ENCODE measurements at regions of chr9 and their contacts with region 1.

Region 1: GRCh38 chr9:107465467-107466451 is 23.8 kb downstream of the KLF4 start:
- DNase-seq: peak; percentile 47
- H3K4me3 ChIP-seq: peak overlapping the region; percentile 32 to 57 (median 46)
- H3K27ac ChIP-seq: no peak overlapping the region
- H3K4me1 ChIP-seq: peaks cover 3% of the 10 kb centered on the region
- H3K27me3 ChIP-seq: peaks cover 0 to 3% of the 10 kb centered on the region in 2 experiments
- CTCF ChIP-seq: peak; percentile 86 to 88
- POLR2A ChIP-seq: no peak

Region 2: GRCh38 chr9:107367727-107368502 is 97.8 kb before region 1 on chr9:
- CTCF ChIA-PET with region 1: no interaction called
- POLR2A ChIA-PET with region 1: no interaction called
- dilution Hi-C with region 1: no loop called
- intact Hi-C with region 1: no loop called
- DNase-seq: peak; percentile 46
- H3K4me3 ChIP-seq: peak overlapping the region in 1 of 3 experiments; percentile 12
- H3K27ac ChIP-seq: peak overlapping the region; percentile 35
- H3K4me1 ChIP-seq: peaks cover 18% of the 10 kb centered on the region
- H3K27me3 ChIP-seq: no peaks in the 10 kb centered on the region
- CTCF ChIP-seq: no peak
- POLR2A ChIP-seq: no peak

Region 3: DNA sequence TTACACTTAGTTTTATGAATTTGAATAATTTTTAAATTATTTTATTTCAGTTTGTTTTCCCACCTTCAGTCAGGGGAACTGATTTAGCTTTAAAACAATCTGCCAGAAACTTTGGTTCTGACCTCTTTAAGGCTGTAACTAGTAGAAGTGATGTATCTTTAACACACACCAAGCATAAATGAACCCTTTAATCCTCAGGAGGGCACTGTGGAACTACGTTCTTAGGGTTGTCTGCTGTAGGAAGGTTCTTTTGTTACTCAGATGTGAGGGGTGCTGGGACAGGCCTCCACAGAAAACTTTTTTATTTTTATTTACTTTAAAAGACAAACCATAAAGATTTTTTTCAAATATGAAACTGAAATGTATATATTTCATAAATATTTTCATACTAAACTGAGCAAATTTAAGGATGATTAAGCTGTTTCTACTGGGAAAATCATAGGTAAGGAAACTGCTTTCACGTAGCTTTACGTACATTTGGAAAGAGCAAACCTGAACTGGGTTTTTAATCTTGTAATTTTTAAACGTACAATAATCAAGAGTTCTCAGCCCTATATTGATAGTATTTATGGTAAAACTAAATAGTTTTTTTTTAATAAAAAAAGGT is 18.5 kb after region 1 on chr9:
- CTCF ChIA-PET with region 1: interaction called, 15 read pairs
- POLR2A ChIA-PET with region 1: no interaction called
- dilution Hi-C with region 1: no loop called
- intact Hi-C with region 1: loop called (anchors 1 kb)
- DNase-seq: peak; percentile 84
- H3K4me3 ChIP-seq: no peak overlapping the region
- H3K27ac ChIP-seq: no peak overlapping the region
- H3K4me1 ChIP-seq: peaks cover 8% of the 10 kb centered on the region
- H3K27me3 ChIP-seq: peaks cover 3 to 8% of the 10 kb centered on the region in 2 experiments
- CTCF ChIP-seq: peak; percentile 36 to 45
- POLR2A ChIP-seq: no peak